ENCODE measurements at regions of chr1 and their contacts with region 1.

Region 1: GRCh38 chr1:95084317-95085176 is 11.8 kb upstream of the ALG14 start:
- DNase-seq: no peak
- H3K4me3 ChIP-seq: no peak overlapping the region
- H3K27ac ChIP-seq: no peak overlapping the region
- H3K4me1 ChIP-seq: peaks cover 7% of the 10 kb centered on the region
- H3K27me3 ChIP-seq: no peaks in the 10 kb centered on the region
- CTCF ChIP-seq: peak; percentile 67 to 80

Region 2: DNA sequence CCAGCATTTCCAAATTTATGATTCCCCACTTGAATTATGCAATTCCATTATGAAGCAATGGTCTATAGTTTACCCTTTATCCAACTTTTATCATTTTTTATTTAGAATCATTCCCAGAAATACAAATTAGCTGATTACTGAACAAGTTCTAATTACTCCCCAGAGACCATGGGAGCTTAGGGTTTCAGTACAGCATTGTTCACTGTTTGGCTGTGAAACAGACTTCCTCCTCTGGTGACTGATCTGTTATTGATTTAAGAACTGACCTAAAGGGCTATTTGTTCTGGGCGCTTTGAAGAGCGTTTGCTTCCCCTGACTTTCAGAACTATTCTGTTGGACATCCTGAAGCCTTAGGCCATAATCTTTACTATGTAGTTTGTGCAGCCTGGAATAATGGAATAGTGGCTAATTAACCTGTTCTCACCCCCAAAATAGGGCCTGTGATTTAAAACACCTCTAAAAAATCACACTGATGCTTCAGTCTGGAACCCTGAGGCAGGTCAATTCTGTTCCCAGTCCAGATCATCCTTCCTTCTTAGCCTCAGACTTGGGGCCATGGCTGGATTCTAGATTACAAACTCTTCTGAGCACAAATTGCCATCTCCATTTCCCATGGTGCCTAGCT is 70.5 kb before region 1 on chr1:
- CTCF ChIA-PET with region 1: no interaction called
- dilution Hi-C with region 1: no loop called
- in situ Hi-C with region 1: no loop called
- intact Hi-C with region 1: no loop called
- DNase-seq: no peak
- H3K4me3 ChIP-seq: no peak overlapping the region
- H3K27ac ChIP-seq: no peak overlapping the region
- H3K4me1 ChIP-seq: peaks cover 7% of the 10 kb centered on the region
- H3K27me3 ChIP-seq: no peaks in the 10 kb centered on the region
- CTCF ChIP-seq: no peak

Region 3: GRCh38 chr1:95048317-95048716 is 36.2 kb before region 1 on chr1:
- CTCF ChIA-PET with region 1: no interaction called
- dilution Hi-C with region 1: no loop called
- in situ Hi-C with region 1: no loop called
- intact Hi-C with region 1: no loop called
- DNase-seq: no peak
- H3K4me3 ChIP-seq: no peak overlapping the region
- H3K27ac ChIP-seq: no peak overlapping the region
- H3K4me1 ChIP-seq: no peaks in the 10 kb centered on the region
- H3K27me3 ChIP-seq: no peaks in the 10 kb centered on the region
- CTCF ChIP-seq: no peak

Region 4: GRCh38 chr1:95127380-95127779 is 42.8 kb after region 1 on chr1:
- CTCF ChIA-PET with region 1: no interaction called
- dilution Hi-C with region 1: loop called (anchors 5 kb)
- in situ Hi-C with region 1: no loop called
- intact Hi-C with region 1: no loop called
- DNase-seq: no peak
- H3K4me3 ChIP-seq: no peak overlapping the region
- H3K27ac ChIP-seq: no peak overlapping the region
- H3K4me1 ChIP-seq: no peaks in the 10 kb centered on the region
- H3K27me3 ChIP-seq: no peaks in the 10 kb centered on the region
- CTCF ChIP-seq: no peak

Measured in mammary epithelial cell (primary cell).